Naive thymus-derived CD4-positive, alpha-beta T cell (primary cell): ENCODE measurements at regions of chr11 and their contacts with region 1.

Region 1: GRCh38 chr11:121194731-121195596 is 93.9 kb downstream of the TECTA start:
- DNase-seq: peak; percentile 13 to 67 (median 50)
- ATAC-seq: peak; percentile 85
- H3K4me3 ChIP-seq: no peak overlapping the region
- H3K4me3 Mint-ChIP-seq: no peak overlapping the region
- H3K27ac ChIP-seq: no peak overlapping the region
- H3K27ac Mint-ChIP-seq: no peak overlapping the region
- H3K4me1 ChIP-seq: no peaks in the 10 kb centered on the region
- H3K4me1 Mint-ChIP-seq: peaks cover 0 to 8% (median 0%) of the 10 kb centered on the region in 7 donors
- H3K27me3 ChIP-seq: peaks cover 0 to 5% of the 10 kb centered on the region in 2 donors
- H3K27me3 Mint-ChIP-seq: peaks cover 21 to 35% (median 25%) of the 10 kb centered on the region in 5 donors

Region 2: GRCh38 chr11:120500414-120501071 is 694.4 kb before region 1 on chr11:
- CTCF ChIA-PET with region 1: no interaction called
- POLR2A ChIA-PET with region 1: no interaction called
- intact Hi-C with region 1: loop called in 1 of 2 experiments (anchors 5 kb)
- DNase-seq: no peak
- ATAC-seq: no peak
- H3K4me3 ChIP-seq: no peak overlapping the region
- H3K4me3 Mint-ChIP-seq: no peak overlapping the region
- H3K27ac ChIP-seq: no peak overlapping the region
- H3K27ac Mint-ChIP-seq: no peak overlapping the region
- H3K4me1 ChIP-seq: no peaks in the 10 kb centered on the region
- H3K4me1 Mint-ChIP-seq: no peaks in the 10 kb centered on the region
- H3K27me3 ChIP-seq: no peaks in the 10 kb centered on the region
- H3K27me3 Mint-ChIP-seq: peaks cover 44 to 56% (median 52%) of the 10 kb centered on the region in 5 donors

Region 3: DNA sequence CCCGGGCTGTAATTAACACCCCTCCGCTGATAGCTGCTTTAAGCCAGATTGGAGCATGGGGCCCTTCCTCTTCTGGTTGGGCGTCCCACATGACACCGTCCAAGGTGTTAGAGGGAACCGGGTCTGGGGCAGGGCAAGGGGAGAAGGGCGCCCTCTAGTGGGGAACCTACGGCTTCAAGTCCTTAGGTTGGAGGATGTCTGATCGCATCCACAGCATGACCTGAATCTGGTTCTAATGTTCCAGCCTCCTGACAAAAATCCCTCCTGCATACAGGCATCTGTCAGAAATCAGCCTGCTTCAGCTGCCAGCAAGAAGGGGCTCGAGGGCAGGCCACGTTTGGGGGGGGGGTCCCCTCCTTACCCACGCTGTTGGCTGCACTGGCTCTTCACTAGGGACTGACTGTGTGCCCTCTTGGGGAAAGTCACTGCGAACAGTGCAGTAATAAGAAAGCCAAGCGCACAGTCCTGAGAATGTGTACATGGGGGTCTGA is 265.3 kb before region 1 on chr11:
- CTCF ChIA-PET with region 1: no interaction called
- POLR2A ChIA-PET with region 1: no interaction called
- intact Hi-C with region 1: loop called in 1 of 2 experiments (anchors 1 kb)
- DNase-seq: peak in 5 of 9 donors; percentile 5 to 45 (median 11)
- ATAC-seq: peak; percentile 79
- H3K4me3 ChIP-seq: no peak overlapping the region
- H3K4me3 Mint-ChIP-seq: no peak overlapping the region
- H3K27ac ChIP-seq: no peak overlapping the region
- H3K27ac Mint-ChIP-seq: no peak overlapping the region
- H3K4me1 ChIP-seq: no peaks in the 10 kb centered on the region
- H3K4me1 Mint-ChIP-seq: no peaks in the 10 kb centered on the region
- H3K27me3 ChIP-seq: no peaks in the 10 kb centered on the region
- H3K27me3 Mint-ChIP-seq: peaks cover 0 to 11% (median 6%) of the 10 kb centered on the region in 5 donors

Region 4: DNA sequence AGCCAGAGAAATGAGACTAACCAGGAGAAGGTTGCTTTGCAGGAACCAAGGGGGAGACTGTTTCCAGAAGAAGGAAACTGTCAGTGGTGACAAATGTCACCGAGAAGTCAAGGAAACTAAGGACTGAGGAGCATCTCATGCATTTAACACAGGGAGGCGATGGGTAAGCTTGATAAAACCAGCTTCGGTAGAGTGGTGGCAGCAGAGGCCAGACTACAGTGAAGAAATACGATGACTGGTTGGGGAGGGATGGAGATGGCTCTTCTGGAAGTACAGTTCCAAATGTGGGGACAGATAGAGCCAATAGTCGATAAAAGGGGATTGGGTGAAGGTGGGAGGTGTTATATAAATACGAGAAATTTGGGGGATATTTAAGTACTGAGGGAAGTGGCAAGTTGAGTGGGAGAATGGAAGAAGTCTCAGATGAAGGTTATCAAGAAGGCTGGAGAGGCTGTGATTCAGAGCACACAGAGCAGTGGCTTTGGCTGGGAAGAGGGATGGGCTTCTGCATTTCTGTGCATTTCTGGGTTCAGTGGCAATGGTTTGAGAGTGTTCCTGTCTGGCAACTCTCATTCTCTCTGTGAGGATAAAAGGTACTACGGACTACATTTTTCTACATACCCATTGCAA is 126.8 kb after region 1 on chr11:
- CTCF ChIA-PET with region 1: no interaction called
- POLR2A ChIA-PET with region 1: no interaction called
- intact Hi-C with region 1: no loop called
- DNase-seq: peak in 6 of 9 donors; percentile 16 to 51 (median 42)
- ATAC-seq: peak; percentile 74
- H3K4me3 ChIP-seq: no peak overlapping the region
- H3K4me3 Mint-ChIP-seq: peak overlapping the region in 5 of 10 donors; percentile 4 to 50 (median 10)
- H3K27ac ChIP-seq: no peak overlapping the region
- H3K27ac Mint-ChIP-seq: peak overlapping the region in 7 of 9 donors; percentile 7 to 83 (median 31)
- H3K4me1 ChIP-seq: peaks cover 0 to 7% of the 10 kb centered on the region in 2 donors
- H3K4me1 Mint-ChIP-seq: peaks cover 18 to 37% (median 31%) of the 10 kb centered on the region in 7 donors
- H3K27me3 ChIP-seq: no peaks in the 10 kb centered on the region
- H3K27me3 Mint-ChIP-seq: peaks cover 0 to 6% (median 0%) of the 10 kb centered on the region in 5 donors